Endothelial cell of umbilical vein (primary cell): ENCODE measurements at regions of chr16 and their contacts with region 1.

Region 1: DNA sequence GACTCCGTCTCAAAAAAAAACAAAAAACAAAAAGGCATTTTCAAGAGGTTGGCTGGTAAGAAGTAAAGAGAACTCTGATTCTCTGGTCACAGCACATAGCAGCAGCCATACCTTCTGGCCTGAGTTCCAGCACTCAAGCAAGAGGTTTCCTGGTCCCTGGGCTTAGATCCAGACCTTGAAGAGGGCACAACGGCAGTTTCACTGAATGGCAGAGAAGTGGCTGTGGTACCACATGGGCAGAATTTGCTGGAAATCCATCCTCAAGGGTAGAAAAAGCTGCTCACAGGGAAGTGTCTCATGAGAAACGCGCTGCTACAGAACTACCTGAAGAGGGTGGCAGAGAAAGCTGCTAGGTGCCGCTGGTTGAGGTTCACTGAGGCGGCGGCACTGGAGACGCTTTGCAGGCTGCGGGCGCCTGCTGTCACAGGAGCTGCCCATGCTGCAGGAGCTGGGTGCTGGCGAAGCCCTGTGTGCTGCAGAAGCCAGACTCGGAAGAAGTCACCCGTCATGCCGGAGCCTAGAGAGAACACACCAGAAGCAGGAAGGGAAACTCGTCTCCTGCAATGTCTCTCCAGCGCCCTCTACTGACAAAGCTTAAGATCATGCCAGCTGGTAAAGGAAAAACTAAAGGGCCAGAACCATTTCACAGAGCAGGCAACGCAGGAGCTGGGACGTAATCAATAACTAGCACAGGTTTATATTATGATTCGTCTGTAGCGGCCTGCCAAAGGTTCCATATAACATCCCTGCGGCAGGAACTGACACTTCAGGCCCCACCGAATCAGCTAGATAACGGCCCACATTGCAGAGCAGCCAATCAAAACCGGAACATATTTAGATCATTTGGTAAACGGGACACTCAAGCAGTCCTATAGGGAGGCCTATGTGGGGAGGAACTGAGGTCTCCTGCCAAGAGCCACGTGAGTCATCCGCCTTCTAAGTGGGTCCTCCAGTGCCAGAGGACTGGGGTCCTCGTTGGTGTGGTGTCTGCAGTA is 5.4 kb upstream of the ZNF213 start:
- DNase-seq: peak; percentile 80
- H3K4me3 ChIP-seq: no peak overlapping the region
- H3K27ac ChIP-seq: no peak overlapping the region
- H3K4me1 ChIP-seq: peaks cover 8% of the 10 kb centered on the region
- H3K27me3 ChIP-seq: no peaks in the 10 kb centered on the region
- CTCF ChIP-seq: peak; percentile 86 to 89
- POLR2A ChIP-seq: peak; percentile 48

Region 2: DNA sequence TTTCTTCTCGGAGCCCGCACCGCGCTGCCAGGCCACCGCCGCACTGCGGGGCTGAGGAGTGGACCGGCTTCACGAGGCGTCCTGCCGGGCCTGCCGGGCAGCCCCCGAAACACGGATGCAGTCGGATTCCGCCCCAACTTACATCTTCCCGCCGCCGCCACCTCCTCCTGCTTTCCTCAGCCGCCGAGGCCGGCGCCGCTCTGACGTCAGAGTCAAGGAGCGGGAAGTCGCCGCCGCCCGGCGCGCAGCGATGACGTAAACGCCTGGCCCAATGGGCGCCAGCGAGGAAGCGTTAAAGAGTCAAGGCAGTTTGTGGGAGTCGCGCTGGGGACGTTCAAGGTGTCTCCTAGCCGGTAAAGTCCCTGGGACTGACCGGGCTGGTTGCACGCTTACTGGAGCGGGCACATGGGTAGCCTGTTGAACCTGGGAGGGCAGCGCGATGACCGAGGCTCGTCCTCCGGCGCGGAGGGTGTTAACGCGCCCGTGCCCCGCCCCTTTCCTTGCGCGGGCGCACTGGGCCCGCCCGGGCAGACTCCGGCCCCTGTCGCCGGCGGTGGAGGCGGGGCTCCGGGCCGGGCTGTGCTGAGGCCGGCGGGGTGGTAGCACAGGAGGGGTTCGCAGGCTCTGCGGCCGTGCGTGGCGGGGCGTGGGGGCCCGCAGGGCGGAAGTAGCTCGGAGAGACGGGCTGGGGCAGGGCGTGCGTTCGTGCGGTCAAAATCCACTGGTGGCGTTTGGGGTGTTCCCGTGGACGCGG is 861.3 kb before region 1 on chr16 and contains the start of gene RNPS1:
- CTCF ChIA-PET with region 1: no interaction called
- POLR2A ChIA-PET with region 1: no interaction called
- dilution Hi-C with region 1: no loop called
- intact Hi-C with region 1: no loop called
- DNase-seq: peak; percentile 96
- H3K4me3 ChIP-seq: peak within 1 kb of the TSS; percentile 16 to 73 (median 44)
- H3K27ac ChIP-seq: peak within 1 kb of the TSS; percentile 78
- H3K4me1 ChIP-seq: peaks cover 9% of the 10 kb centered on the region
- H3K27me3 ChIP-seq: no peaks in the 10 kb centered on the region
- CTCF ChIP-seq: no peak
- POLR2A ChIP-seq: peak; percentile 85
- total RNA-seq, gene RNPS1: 204 and 209 TPM in 2 replicates

Region 3: DNA sequence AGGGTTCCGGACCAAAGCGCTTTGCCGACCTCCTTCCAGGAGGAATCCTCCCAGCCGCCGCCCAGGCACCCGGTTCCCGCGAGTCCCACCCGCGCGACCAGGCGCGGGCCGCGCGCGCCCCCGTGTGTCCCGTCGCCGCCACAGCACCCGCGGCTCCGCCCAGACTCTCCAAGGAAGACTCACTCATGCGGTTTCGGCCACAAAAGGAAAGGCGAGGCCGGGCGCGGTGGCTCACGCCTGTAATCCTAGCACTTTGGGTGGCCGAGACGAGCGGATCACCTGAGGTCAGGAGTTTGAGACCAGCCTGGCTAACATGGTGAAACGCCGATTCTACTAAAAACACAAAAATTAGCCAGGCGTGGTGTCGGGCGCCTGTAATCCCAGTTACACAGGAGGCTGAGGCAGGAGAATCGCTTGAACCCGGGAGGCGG is 145.7 kb before region 1 on chr16:
- CTCF ChIA-PET with region 1: no interaction called
- POLR2A ChIA-PET with region 1: no interaction called
- dilution Hi-C with region 1: no loop called
- intact Hi-C with region 1: no loop called
- DNase-seq: peak; percentile 76
- H3K4me3 ChIP-seq: no peak overlapping the region
- H3K27ac ChIP-seq: no peak overlapping the region
- H3K4me1 ChIP-seq: peaks cover 10% of the 10 kb centered on the region
- H3K27me3 ChIP-seq: no peaks in the 10 kb centered on the region
- CTCF ChIP-seq: peak; percentile 81 to 91
- POLR2A ChIP-seq: no peak

Region 4: GRCh38 chr16:3045357-3045728 is 84.1 kb before region 1 on chr16:
- CTCF ChIA-PET with region 1: interaction called, 13 read pairs
- POLR2A ChIA-PET with region 1: no interaction called
- dilution Hi-C with region 1: no loop called
- intact Hi-C with region 1: no loop called
- DNase-seq: peak; percentile 22
- H3K4me3 ChIP-seq: peak overlapping the region in 1 of 3 experiments; percentile 37
- H3K27ac ChIP-seq: no peak overlapping the region
- H3K4me1 ChIP-seq: peaks cover 2% of the 10 kb centered on the region
- H3K27me3 ChIP-seq: peaks cover 18 to 27% of the 10 kb centered on the region in 2 experiments
- CTCF ChIP-seq: no peak
- POLR2A ChIP-seq: no peak

Region 5: GRCh38 chr16:3065069-3065741 is 64.2 kb before region 1 on chr16 and contains the start of gene IL32:
- CTCF ChIA-PET with region 1: interaction called, 113 read pairs
- POLR2A ChIA-PET with region 1: interaction called, 5 read pairs
- dilution Hi-C with region 1: no loop called
- intact Hi-C with region 1: no loop called
- DNase-seq: peak; percentile 88
- H3K4me3 ChIP-seq: peak within 1 kb of the TSS in 2 of 3 experiments; percentile 40 to 54
- H3K27ac ChIP-seq: peak within 1 kb of the TSS; percentile 94
- H3K4me1 ChIP-seq: peaks cover 19% of the 10 kb centered on the region
- H3K27me3 ChIP-seq: no peaks in the 10 kb centered on the region
- CTCF ChIP-seq: no peak
- POLR2A ChIP-seq: no peak
- total RNA-seq, gene IL32: 55.7 and 127 TPM in 2 replicates

Region 6: GRCh38 chr16:3094289-3095027 is 35.0 kb before region 1 on chr16:
- CTCF ChIA-PET with region 1: interaction called, 49 read pairs
- POLR2A ChIA-PET with region 1: no interaction called
- dilution Hi-C with region 1: no loop called
- intact Hi-C with region 1: loop called (anchors 1 kb)
- DNase-seq: peak; percentile 74
- H3K4me3 ChIP-seq: no peak overlapping the region
- H3K27ac ChIP-seq: no peak overlapping the region
- H3K4me1 ChIP-seq: peaks cover under 1% of the 10 kb centered on the region
- H3K27me3 ChIP-seq: peaks cover 0 to 2% of the 10 kb centered on the region in 2 experiments
- CTCF ChIP-seq: peak; percentile 61 to 70
- POLR2A ChIP-seq: no peak

Region 7: GRCh38 chr16:3106205-3106928 is 23.1 kb before region 1 on chr16:
- CTCF ChIA-PET with region 1: interaction called, 25 read pairs
- POLR2A ChIA-PET with region 1: interaction called, 3 read pairs
- dilution Hi-C with region 1: no loop called
- intact Hi-C with region 1: loop called (anchors 1 kb)
- DNase-seq: peak; percentile 76
- H3K4me3 ChIP-seq: peak overlapping the region; percentile 34 to 76 (median 73)
- H3K27ac ChIP-seq: peak overlapping the region; percentile 38
- H3K4me1 ChIP-seq: peaks cover 17% of the 10 kb centered on the region
- H3K27me3 ChIP-seq: no peaks in the 10 kb centered on the region
- CTCF ChIP-seq: no peak
- POLR2A ChIP-seq: peak; percentile 56

Region 8: DNA sequence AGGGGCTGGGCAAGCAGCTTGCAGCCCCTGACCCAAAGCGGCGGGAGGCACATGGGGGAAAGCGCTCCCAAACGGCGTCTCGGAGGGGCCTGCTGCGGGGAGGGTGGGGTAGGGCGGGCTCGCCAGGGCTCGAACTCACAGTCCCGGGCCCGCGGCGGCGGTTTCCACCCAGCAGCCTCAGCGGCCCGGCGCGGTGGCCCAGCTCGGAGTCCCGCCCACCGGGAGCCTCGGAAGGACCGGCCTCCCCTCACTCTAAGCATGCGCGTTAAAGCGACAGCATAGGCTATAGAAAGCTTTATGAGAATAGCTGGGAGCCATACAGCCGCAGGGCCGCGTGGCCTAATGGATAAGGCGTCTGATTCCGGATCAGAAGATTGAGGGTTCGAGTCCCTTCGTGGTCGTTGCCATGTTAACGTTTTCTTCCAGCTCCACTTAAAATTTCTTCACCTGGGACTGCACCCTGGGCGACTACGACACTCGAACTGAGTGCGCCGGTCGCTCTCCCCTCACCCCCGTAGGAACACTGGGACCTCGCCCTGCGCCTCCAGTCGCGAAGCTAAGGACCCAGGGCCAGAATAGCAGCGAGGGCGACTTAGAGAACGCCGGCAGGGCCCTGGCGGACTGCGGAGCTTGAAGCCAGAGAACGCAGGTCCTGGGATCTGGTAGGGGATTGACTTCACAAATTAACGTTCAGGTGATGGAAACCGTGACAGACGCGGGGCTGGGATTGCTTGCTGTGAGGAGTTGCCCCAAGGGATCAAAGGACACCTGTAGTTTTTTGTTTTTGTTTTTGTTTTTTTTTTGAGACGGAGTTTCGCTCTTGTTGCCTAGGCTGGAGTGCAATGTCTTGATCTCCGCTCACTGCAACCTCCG is 21.1 kb after region 1 on chr16:
- CTCF ChIA-PET with region 1: interaction called, 54 read pairs
- POLR2A ChIA-PET with region 1: interaction called, 9 read pairs
- dilution Hi-C with region 1: no loop called
- intact Hi-C with region 1: loop called (anchors 1 kb)
- DNase-seq: peak; percentile 98
- H3K4me3 ChIP-seq: peak overlapping the region; percentile 68 to 80 (median 69)
- H3K27ac ChIP-seq: peak overlapping the region; percentile 37
- H3K4me1 ChIP-seq: peaks cover 10% of the 10 kb centered on the region
- H3K27me3 ChIP-seq: no peaks in the 10 kb centered on the region
- CTCF ChIP-seq: no peak
- POLR2A ChIP-seq: peak; percentile 33